ENCODE measurements at regions of chr4 and their contacts with region 1.

Region 1: GRCh38 chr4:86921608-86922252 is 13.1 kb upstream of the AFF1 start:
- DNase-seq: peak; percentile 89
- H3K4me3 Mint-ChIP-seq: peak overlapping the region; percentile 48
- H3K27ac Mint-ChIP-seq: peak overlapping the region; percentile 84
- H3K4me1 Mint-ChIP-seq: peaks cover 52% of the 10 kb centered on the region
- H3K27me3 Mint-ChIP-seq: no peaks in the 10 kb centered on the region
- CTCF ChIP-seq: no peak

Region 2: GRCh38 chr4:86901866-86902265 is 19.9 kb before region 1 on chr4:
- CTCF ChIA-PET with region 1: interaction called, 17 read pairs
- POLR2A ChIA-PET with region 1: interaction called, 3 read pairs
- intact Hi-C with region 1: no loop called
- DNase-seq: no peak
- H3K4me3 Mint-ChIP-seq: no peak overlapping the region
- H3K27ac Mint-ChIP-seq: no peak overlapping the region
- H3K4me1 Mint-ChIP-seq: no peaks in the 10 kb centered on the region
- H3K27me3 Mint-ChIP-seq: no peaks in the 10 kb centered on the region
- CTCF ChIP-seq: no peak

Region 3: GRCh38 chr4:86957214-86957613 is 35.5 kb after region 1 on chr4:
- CTCF ChIA-PET with region 1: interaction called, 14 read pairs
- POLR2A ChIA-PET with region 1: interaction called, 4 read pairs
- intact Hi-C with region 1: no loop called
- DNase-seq: no peak
- H3K4me3 Mint-ChIP-seq: no peak overlapping the region
- H3K27ac Mint-ChIP-seq: no peak overlapping the region
- H3K4me1 Mint-ChIP-seq: peaks cover 6% of the 10 kb centered on the region
- H3K27me3 Mint-ChIP-seq: no peaks in the 10 kb centered on the region
- CTCF ChIP-seq: no peak

Region 4: GRCh38 chr4:87078987-87079486 is 157.3 kb after region 1 on chr4:
- CTCF ChIA-PET with region 1: interaction called, 13 read pairs
- POLR2A ChIA-PET with region 1: interaction called, 5 read pairs
- intact Hi-C with region 1: no loop called
- DNase-seq: peak; percentile 34
- H3K4me3 Mint-ChIP-seq: no peak overlapping the region
- H3K27ac Mint-ChIP-seq: no peak overlapping the region
- H3K4me1 Mint-ChIP-seq: peaks cover 40% of the 10 kb centered on the region
- H3K27me3 Mint-ChIP-seq: no peaks in the 10 kb centered on the region
- CTCF ChIP-seq: no peak

Region 5: GRCh38 chr4:87093443-87094123 is 171.9 kb after region 1 on chr4:
- CTCF ChIA-PET with region 1: interaction called, 53 read pairs
- POLR2A ChIA-PET with region 1: interaction called, 23 read pairs
- intact Hi-C with region 1: loop called (anchors 1 kb)
- DNase-seq: peak; percentile 59
- H3K4me3 Mint-ChIP-seq: peak overlapping the region; percentile 23
- H3K27ac Mint-ChIP-seq: peak overlapping the region; percentile 87
- H3K4me1 Mint-ChIP-seq: peaks cover 25% of the 10 kb centered on the region
- H3K27me3 Mint-ChIP-seq: no peaks in the 10 kb centered on the region
- CTCF ChIP-seq: peak; percentile 57

Region 6: DNA sequence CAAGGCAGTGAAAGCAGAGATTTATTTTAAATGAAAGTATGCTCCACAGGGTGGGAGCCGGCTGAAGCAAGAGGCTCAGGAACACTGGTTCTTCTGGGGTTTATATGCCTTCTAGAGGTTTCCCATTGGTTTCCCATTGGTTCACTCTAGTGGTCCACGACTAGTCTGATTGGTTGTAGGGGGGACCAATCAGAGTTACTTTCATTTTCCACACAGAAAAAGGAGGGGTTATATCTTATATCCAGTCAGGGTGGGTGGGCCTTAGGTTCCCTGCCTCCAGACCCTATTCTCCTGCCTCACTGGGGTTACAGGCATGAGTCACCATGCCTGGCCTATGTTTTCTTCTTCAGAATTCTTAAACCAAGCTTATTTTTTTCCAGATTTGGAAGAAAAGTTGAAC is 197.1 kb after region 1 on chr4:
- CTCF ChIA-PET with region 1: interaction called, 35 read pairs
- POLR2A ChIA-PET with region 1: interaction called, 61 read pairs
- intact Hi-C with region 1: loop called (anchors 1 kb)
- DNase-seq: peak; percentile 28
- H3K4me3 Mint-ChIP-seq: no peak overlapping the region
- H3K27ac Mint-ChIP-seq: no peak overlapping the region
- H3K4me1 Mint-ChIP-seq: peaks cover 29% of the 10 kb centered on the region
- H3K27me3 Mint-ChIP-seq: no peaks in the 10 kb centered on the region
- CTCF ChIP-seq: no peak

Region 7: GRCh38 chr4:87235020-87235671 is 313.4 kb after region 1 on chr4:
- CTCF ChIA-PET with region 1: interaction called, 20 read pairs
- POLR2A ChIA-PET with region 1: interaction called, 3 read pairs
- intact Hi-C with region 1: loop called (anchors 5 kb)
- DNase-seq: no peak
- H3K4me3 Mint-ChIP-seq: peak overlapping the region; percentile 74
- H3K27ac Mint-ChIP-seq: peak overlapping the region; percentile 79
- H3K4me1 Mint-ChIP-seq: peaks cover 6% of the 10 kb centered on the region
- H3K27me3 Mint-ChIP-seq: no peaks in the 10 kb centered on the region
- CTCF ChIP-seq: no peak

Measured in MCF 10A (cell line).